ENCODE measurements at regions of chr20 and their contacts with region 1.

Region 1: DNA sequence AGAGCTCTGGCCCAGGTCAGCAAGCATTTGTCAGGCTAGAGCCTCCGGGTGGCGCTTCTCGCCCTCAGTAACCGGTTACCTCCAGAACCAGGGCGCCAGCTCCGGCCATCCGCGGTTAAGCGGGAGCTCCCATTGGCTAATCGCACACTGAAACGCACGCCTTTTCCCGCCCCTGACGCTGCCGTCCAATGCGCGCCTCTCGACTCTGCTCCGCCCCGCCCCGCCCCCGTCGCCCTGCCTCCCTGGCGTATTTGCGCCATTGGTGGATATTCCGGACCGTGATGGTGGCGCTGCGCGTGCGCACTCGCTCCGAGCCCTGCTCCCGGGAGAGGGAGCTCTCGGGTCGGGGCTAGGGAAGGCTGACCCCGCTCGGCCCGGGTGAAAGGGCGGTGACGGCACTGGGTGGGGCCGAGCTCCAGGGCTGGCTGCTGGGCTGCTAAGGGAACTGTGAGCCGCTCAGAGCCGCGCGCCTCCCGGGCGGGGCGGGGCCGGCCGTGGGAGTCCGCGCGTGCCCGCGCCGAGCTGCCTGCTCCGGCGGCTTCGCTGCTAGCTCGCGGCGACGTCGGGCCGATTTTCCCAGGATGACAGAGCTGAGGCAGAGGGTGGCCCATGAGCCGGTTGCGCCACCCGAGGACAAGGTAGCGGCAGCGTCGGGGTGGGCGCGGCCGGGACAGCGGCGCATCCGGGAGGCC is at the start of gene CDS2:
- DNase-seq: peak; percentile 100
- H3K4me3 ChIP-seq: peak within 1 kb of the TSS; percentile 50 to 80
- H3K27ac ChIP-seq: peak within 1 kb of the TSS; percentile 87 to 91
- H3K4me1 ChIP-seq: peaks cover 4% of the 10 kb centered on the region in 2 donors
- H3K27me3 ChIP-seq: no peaks in the 10 kb centered on the region
- CTCF ChIP-seq: peak; percentile 57 to 65 (median 62)
- POLR2A ChIP-seq: peak; percentile 70 to 79
- total RNA-seq, gene CDS2: 22.5 to 66.6 (median 41.7) TPM

Region 2: GRCh38 chr20:5191829-5192569 is 65.3 kb after region 1 on chr20:
- intact Hi-C with region 1: loop called (anchors 5 kb)
- DNase-seq: peak; percentile 33 to 48
- H3K4me3 ChIP-seq: no peak overlapping the region
- H3K27ac ChIP-seq: peak overlapping the region; percentile 48 to 77
- H3K4me1 ChIP-seq: peaks cover 0 to 3% of the 10 kb centered on the region in 2 donors
- H3K27me3 ChIP-seq: no peaks in the 10 kb centered on the region
- CTCF ChIP-seq: peak; percentile 65 to 89 (median 79)
- POLR2A ChIP-seq: no peak

Region 3: DNA sequence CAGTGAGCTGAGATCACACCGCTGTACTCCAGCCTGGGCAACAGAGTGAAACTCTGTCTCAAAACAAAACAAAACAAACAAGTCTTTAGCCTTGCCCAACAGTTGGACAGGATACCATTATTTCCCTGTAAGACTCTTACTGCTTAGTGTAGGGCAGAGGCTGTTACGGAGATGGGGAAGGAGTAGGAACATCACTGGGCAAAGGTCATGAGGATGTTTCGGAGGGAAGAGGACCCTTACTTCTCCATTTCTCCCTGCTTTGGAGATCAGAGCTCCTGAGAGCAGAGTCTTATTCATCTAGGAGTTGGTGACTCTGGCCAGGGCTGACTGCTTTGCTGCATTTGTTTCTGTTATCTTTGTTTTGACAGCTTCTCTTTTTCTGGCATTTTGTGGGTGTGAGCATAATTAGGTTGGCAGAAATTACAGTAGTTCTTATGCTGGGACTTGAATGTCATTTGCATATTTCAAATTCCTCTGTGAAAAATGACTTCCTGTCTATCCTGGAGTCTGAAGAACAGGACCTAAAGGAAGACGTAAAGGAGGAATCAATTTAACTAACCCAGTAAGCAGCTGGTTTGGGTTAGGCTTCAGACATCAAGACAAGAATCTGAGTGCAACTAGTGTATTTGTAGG is 89.1 kb after region 1 on chr20:
- intact Hi-C with region 1: no loop called
- DNase-seq: no peak
- H3K4me3 ChIP-seq: no peak overlapping the region
- H3K27ac ChIP-seq: no peak overlapping the region
- H3K4me1 ChIP-seq: no peaks in the 10 kb centered on the region
- H3K27me3 ChIP-seq: no peaks in the 10 kb centered on the region
- CTCF ChIP-seq: no peak
- POLR2A ChIP-seq: no peak